Adrenal gland (tissue), 19 donors: ENCODE measurements at regions of chr6 and their contacts with region 1.

Region 1: DNA sequence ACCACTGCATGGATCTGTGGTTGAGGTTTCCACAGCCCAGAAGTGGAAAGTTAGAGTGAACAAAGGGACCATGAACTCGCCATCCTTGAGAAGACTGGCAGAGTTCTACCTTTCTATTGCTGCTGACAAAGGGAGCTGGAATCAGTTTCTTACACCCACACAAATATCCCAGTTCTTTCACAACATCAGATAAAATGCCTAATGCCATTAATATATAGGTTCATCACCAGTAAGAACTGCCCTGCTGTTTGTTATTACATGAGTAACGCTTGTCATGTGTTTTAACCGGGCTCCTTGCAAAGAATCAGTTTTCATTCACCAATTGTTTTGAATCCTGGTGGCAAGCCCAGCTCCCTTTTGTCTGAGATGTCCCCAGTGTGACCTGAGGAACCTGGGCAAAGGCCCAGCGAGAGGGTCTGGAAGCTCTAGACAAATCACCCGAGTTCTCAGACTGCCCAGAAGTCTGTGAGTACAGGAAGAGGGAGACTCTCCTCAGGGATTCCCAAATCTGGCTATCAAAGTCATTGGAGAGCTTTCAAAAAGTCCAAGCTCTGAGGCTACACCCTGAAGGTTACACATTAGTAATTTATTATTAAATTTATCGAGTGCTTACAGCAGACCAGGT is 7.5 kb upstream of the CD164 start:
- DNase-seq: no peak
- H3K4me3 ChIP-seq: no peak overlapping the region
- H3K27ac ChIP-seq: no peak overlapping the region
- H3K4me1 ChIP-seq: peaks cover 0 to 6% of the 10 kb centered on the region in 2 donors
- H3K27me3 ChIP-seq: no peaks in the 10 kb centered on the region
- CTCF ChIP-seq: no peak
- POLR2A ChIP-seq: no peak

Region 2: DNA sequence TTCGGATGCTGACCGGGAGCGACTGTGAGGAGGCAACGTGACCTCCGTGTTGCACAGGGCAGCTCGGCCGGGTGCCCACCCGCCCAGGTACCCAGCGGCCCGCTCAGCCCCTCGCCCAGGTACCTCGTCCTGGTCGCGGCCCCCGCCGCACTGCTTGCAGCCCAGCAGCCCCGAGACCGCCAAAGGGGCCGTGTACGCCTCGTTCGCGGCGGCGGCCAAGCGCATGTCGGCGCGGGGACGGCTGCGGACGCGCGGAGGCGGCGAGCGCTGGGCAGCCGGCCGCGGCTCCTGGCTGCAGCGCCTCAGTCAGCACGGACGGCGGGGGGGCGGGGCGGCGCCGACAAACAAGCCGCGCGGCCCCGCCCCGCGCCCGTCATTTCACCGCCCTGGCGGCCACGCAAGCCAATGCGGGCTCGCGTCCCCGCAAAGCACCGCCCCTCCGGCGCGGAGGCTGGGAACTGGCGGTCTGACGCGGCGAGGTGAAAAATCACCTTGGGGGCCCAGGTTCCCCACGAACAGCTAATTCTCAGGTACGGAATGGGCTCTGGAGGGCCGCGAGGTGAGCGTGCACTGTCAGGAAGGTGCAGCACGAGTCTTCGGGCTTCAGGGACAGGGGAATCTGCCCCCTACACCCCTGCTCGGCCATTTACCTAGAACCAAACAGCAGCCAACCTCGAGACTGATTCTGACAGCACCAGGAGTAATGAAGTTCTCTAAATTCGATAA is 380.4 kb before region 1 on chr6:
- intact Hi-C with region 1: no loop called
- DNase-seq: peak; percentile 91 to 98 (median 96)
- H3K4me3 ChIP-seq: peak overlapping the region; percentile 41 to 96 (median 52)
- H3K27ac ChIP-seq: peak overlapping the region; percentile 68 to 99 (median 95)
- H3K4me1 ChIP-seq: peaks cover 6 to 45% of the 10 kb centered on the region in 2 donors
- H3K27me3 ChIP-seq: no peaks in the 10 kb centered on the region
- CTCF ChIP-seq: peak in 4 of 6 experiments; percentile 29 to 77 (median 52)
- POLR2A ChIP-seq: peak; percentile 92 to 99

Region 3: GRCh38 chr6:109103942-109104341 is 285.8 kb before region 1 on chr6:
- intact Hi-C with region 1: loop called in 1 of 2 experiments (anchors 5 kb)
- DNase-seq: no peak
- H3K4me3 ChIP-seq: no peak overlapping the region
- H3K27ac ChIP-seq: no peak overlapping the region
- H3K4me1 ChIP-seq: no peaks in the 10 kb centered on the region
- H3K27me3 ChIP-seq: no peaks in the 10 kb centered on the region
- CTCF ChIP-seq: no peak
- POLR2A ChIP-seq: no peak